Panc1 (cell line): ENCODE measurements at regions of chr1 and their contacts with region 1.

Region 1: DNA sequence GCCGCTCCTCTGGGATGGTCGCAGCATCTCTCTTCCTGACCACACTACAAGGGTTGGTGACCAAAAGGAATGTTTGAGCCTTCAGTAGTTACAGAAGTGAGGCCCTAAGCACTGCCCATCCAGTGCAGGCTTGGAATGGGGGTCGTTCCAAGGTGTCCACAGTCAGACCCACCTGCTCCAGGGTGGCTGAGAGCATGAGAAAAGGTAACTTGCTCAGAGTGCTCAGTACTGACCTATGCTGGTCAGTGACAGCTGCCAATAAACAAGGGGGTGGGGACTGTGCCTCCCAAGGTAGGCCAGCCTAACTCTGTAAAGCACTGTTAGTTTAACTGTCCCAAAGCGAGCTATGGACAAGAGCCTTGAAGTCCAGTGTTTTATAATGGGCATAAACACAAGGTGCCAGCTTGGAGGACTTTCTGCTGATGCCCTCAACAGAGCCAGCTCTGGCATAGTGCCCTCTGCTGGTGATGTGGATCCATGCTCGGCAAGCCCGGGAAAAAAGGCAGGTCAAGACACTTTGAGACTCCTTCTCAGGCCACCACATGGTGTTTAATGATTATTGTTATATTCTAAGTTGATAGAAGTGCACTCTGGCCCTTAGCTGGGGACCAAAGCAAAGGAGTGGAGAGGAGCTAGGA is 78.1 kb upstream of the DNAH14 start:
- DNase-seq: peak; percentile 46
- ATAC-seq: peak; percentile 82
- H3K4me3 ChIP-seq: no peak overlapping the region
- H3K27ac ChIP-seq: no peak overlapping the region
- H3K4me1 ChIP-seq: no peaks in the 10 kb centered on the region
- H3K27me3 ChIP-seq: no peaks in the 10 kb centered on the region
- CTCF ChIP-seq: peak; percentile 91

Region 2: DNA sequence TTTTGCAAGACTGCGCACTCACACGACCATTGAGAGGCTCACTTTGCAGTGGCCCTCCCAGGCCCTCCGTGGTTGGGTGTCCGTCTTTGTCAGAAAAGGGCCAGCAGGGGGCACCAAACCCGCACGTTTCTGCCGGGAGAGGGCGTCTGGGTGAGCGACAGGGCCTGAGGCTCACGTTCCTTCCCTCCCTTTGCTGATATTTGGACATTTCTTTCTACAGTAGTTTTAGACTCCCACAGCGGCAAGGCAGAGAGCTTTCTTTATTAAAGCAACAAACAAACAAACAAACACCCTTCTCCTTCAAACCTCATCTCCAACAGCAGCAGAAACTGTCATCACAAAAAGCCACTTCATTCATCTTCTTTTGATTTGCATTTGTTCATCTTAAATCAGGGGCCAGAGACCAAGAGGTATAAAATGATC is 337.5 kb before region 1 on chr1:
- CTCF ChIA-PET with region 1: interaction called, 6 read pairs
- POLR2A ChIA-PET with region 1: no interaction called
- in situ Hi-C with region 1: no loop called
- intact Hi-C with region 1: loop called (anchors 1 kb)
- DNase-seq: no peak
- ATAC-seq: peak; percentile 97
- H3K4me3 ChIP-seq: no peak overlapping the region
- H3K27ac ChIP-seq: no peak overlapping the region
- H3K4me1 ChIP-seq: peaks cover 8% of the 10 kb centered on the region
- H3K27me3 ChIP-seq: no peaks in the 10 kb centered on the region
- CTCF ChIP-seq: peak; percentile 93

Region 3: DNA sequence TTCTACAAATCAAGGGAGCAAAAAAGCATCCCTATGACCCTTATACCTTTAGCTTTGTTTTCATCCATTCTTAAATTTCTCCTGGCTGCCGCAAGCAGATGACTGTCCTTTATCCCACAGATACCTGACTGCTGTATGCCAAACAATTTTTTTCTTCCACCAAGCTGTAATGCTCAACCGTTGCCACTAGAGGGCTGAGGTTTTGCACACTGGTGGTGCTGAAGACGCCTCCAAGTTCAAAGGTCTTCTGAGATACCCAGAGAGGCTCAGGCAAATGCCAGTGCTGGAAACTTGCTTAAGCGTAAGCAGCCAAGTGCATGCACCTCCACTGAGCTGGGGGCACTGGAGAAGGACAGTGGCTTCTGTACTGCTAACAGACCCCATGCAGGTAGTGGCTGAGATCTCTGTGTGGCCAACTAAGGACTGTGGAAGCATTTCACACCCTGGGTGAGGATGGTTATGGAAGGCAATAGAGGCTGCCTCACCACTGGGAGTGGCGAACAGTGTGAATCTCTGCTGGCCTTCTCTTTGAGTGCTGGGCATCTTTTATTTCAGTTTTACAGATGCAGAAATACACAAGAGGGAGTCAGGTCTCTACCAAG is 206.7 kb before region 1 on chr1:
- CTCF ChIA-PET with region 1: no interaction called
- POLR2A ChIA-PET with region 1: no interaction called
- in situ Hi-C with region 1: no loop called
- intact Hi-C with region 1: loop called (anchors 1 kb)
- DNase-seq: peak; percentile 54
- ATAC-seq: peak; percentile 78
- H3K4me3 ChIP-seq: no peak overlapping the region
- H3K27ac ChIP-seq: no peak overlapping the region
- H3K4me1 ChIP-seq: no peaks in the 10 kb centered on the region
- H3K27me3 ChIP-seq: no peaks in the 10 kb centered on the region
- CTCF ChIP-seq: peak; percentile 95

Region 4: GRCh38 chr1:224707843-224708725 is 143.2 kb before region 1 on chr1:
- CTCF ChIA-PET with region 1: no interaction called
- POLR2A ChIA-PET with region 1: no interaction called
- in situ Hi-C with region 1: no loop called
- intact Hi-C with region 1: loop called (anchors 5 kb)
- DNase-seq: no peak
- ATAC-seq: no peak
- H3K4me3 ChIP-seq: no peak overlapping the region
- H3K27ac ChIP-seq: no peak overlapping the region
- H3K4me1 ChIP-seq: no peaks in the 10 kb centered on the region
- H3K27me3 ChIP-seq: no peaks in the 10 kb centered on the region; the same call in 1 of the 2 replicates
- CTCF ChIP-seq: no peak